ENCODE measurements at regions of chr3 and their contacts with region 1.

Region 1: DNA sequence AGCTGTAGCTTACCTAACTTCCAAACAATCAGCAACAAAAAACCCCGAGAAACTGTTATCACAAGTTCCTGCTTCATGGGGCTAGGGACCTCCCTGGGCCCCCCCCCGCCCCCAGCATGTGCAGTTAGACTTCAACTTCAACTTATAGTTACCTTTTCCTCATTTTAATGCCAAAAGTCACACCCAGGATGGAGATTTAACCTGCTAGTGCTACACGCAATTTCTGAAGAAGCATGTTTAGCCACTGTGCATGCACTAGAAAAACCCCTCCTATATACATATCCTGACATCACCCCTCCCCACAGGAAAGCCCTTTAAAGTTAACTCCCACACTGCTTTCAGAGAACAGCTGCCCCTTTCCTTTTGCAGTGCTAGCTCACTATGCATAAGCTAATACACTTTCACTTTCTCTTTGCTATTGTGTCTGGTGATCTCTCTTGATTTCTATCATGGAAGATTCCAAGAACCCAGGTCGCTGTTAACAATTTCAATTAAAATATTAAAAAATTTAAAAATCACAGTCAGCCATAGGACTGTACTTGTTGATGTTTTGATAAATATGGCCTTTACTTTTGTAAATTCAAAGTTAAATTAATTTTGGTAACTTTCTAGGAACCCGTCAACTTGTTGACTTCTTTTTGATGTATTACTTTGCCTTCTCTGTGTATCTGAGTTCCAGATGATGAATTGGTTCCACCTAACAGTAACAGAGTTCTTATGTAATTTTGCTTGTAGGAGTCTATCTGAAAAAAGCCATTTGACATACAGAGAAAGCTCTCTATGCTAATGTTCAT is 75.2 kb upstream of the ACAD9 start:
- DNase-seq: peak; percentile 75
- H3K4me3 Mint-ChIP-seq: peak overlapping the region; percentile 71
- H3K27ac Mint-ChIP-seq: peak overlapping the region; percentile 98
- H3K4me1 Mint-ChIP-seq: peaks cover 70% of the 10 kb centered on the region
- H3K27me3 Mint-ChIP-seq: no peaks in the 10 kb centered on the region

Region 2: DNA sequence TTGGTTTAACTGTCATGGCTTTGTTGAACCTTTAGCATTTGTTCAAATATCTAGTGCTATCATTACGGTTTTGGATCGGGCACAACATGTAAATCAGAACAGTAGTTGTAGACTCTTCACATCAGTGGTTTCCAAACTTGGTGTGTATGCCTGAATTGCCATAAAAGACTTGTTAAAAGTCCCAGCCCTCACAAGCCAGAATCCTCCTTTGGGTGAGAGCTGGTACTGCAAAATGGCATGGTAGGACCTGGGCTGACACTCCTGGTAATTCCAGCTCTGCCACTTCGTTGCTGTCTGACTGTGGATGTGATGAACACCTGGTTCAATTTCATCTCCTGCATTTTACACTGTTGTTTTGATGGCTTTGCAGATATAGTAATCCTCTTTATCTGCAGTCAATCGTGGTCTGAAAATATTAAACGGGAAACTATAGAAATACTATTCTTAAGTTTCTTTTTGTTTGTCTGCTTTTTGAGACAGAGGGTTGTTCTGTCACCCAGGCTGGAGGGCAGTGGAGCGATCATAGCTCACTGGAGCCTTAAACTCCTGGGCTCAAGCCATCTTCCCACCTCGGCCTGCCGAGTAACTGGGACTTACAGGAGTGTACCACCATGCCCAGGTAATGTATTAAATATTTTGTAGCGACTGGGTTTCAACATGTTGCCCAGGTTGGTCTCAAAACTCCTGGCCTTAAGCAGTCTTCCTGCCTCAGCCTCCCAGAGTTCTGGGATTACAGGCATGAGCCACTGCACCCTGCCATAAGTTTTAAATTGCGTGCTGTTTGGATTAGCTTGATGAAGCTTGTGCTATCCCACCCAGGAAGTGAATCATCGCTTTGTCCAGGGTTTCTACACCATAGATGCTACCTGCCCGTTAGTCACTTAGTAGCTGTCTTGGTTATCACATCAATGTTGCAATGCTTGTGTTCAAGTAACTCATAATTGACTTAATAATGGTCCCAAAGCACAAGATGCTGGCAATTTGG is 16.7 kb before region 1 on chr3:
- CTCF ChIA-PET with region 1: interaction called, 17 read pairs
- DNase-seq: peak; percentile 54
- H3K4me3 Mint-ChIP-seq: peak overlapping the region; percentile 67
- H3K27ac Mint-ChIP-seq: peak overlapping the region; percentile 94
- H3K4me1 Mint-ChIP-seq: peaks cover 84% of the 10 kb centered on the region
- H3K27me3 Mint-ChIP-seq: no peaks in the 10 kb centered on the region

Measured in activated naive CD4-positive, alpha-beta T cell treated with anti-CD3 and anti-CD28 coated beads, Interleukin-2, amount 10 ng/mL, durations not matched to agents 7 days and 5 days (primary cell).